ENCODE measurements at regions of chr2 and their contacts with region 1.

Region 1: GRCh38 chr2:45650851-45651414 is 542 bp upstream of the PRKCE start:
- DNase-seq: peak; percentile 84 to 97 (median 97)
- ATAC-seq: peak; percentile 97
- H3K4me3 ChIP-seq: peak overlapping the region; percentile 95
- H3K4me3 Mint-ChIP-seq: peak overlapping the region; percentile 83 to 100 (median 95)
- H3K27ac ChIP-seq: peak overlapping the region; percentile 79
- H3K27ac Mint-ChIP-seq: peak overlapping the region; percentile 90 to 99 (median 95)
- H3K4me1 ChIP-seq: peaks cover 10 to 11% of the 10 kb centered on the region in 2 donors
- H3K4me1 Mint-ChIP-seq: peaks cover 20 to 41% (median 34%) of the 10 kb centered on the region in 7 donors
- H3K27me3 ChIP-seq: peaks cover 0 to 3% of the 10 kb centered on the region in 2 donors
- H3K27me3 Mint-ChIP-seq: peaks cover 0 to 25% (median 0%) of the 10 kb centered on the region in 5 donors

Region 2: DNA sequence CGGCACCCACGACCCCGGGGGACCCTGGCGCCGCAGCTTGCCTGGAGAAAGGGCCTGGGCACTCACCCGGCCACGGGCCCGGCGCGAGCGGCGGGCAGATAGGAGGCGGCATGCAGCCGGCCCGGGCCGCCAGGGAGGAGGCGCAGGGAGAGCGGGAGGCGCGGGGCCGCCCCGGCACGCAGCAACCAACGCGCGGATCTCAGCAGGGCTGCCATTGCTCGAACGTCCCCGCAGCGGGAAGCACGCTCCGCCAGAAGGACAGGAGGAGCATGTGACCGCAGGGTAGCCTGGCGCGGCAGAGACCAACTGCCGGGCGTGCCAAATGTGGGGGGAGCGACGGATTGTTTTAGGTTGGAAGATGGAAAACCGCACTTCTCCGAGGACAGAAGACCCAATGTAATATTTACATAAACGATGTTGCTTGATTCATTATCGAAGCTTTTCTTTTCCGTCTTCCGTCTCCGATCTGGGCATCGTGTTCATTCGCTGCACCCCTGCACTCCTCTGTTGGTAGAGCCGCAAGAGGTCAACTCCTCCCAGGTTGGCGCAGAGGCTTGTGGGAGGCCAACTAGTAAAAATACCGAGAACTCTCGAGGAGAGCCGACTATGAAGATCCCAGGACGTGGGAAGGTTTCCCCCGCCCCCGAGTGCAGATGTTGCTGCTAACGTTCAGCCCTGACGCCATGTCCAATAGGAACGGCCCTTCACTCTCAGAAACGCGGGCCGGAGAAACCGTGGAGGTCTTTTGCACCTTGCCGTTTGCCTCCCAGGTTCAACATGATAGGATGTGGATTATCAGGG is 1655.0 kb before region 1 on chr2 and contains the start of gene LRPPRC:
- CTCF ChIA-PET with region 1: interaction called, 3 read pairs
- POLR2A ChIA-PET with region 1: no interaction called
- intact Hi-C with region 1: loop called (anchors 1 to 2 kb)
- DNase-seq: peak; percentile 69 to 95 (median 90)
- ATAC-seq: peak; percentile 98
- H3K4me3 ChIP-seq: peak within 1 kb of the TSS; percentile 98
- H3K4me3 Mint-ChIP-seq: peak within 1 kb of the TSS; percentile 89 to 99 (median 90)
- H3K27ac ChIP-seq: peak within 1 kb of the TSS; percentile 84
- H3K27ac Mint-ChIP-seq: peak within 1 kb of the TSS; percentile 95 to 100 (median 97)
- H3K4me1 ChIP-seq: peaks cover 9 to 25% of the 10 kb centered on the region in 2 donors
- H3K4me1 Mint-ChIP-seq: peaks cover 34 to 62% (median 52%) of the 10 kb centered on the region in 7 donors
- H3K27me3 ChIP-seq: no peaks in the 10 kb centered on the region
- H3K27me3 Mint-ChIP-seq: peaks cover 0 to 1% (median 0%) of the 10 kb centered on the region in 5 donors
- total RNA-seq, gene LRPPRC: 54.3 to 92.7 (median 71.2) TPM

Region 3: DNA sequence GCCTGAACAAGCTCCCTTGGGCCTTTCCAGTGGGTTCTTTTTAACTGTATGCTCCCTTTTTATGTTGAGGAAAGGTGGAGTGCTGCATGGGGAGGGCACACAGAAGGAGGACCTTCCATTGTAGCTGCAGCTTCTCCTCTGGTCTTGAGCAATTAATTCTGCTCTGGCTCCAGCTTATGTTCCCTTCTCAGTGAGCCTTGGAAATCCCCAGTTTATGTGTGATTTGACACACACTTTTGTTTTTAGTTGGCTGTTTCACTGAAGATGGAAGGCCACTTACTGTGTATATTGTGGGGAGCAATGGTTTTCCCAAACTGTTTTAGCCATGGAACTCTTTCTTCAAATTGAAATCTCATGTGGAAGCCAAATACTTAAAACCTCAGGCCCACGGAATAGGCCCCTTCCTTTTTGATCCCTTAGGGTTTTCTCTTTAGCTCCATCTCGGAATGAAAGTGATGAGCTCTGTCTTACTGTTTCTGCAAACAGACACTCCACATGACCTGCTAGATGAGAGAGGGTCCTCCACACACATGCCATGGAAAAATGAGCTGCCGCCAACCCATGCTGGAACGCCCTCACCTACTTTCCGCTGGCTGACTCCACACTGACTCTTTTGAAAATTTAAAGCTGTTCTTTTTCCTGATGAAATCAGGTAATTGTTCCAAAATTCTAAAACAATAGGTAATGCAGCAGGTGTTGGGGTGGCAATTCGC is 360.8 kb before region 1 on chr2:
- CTCF ChIA-PET with region 1: no interaction called
- POLR2A ChIA-PET with region 1: no interaction called
- intact Hi-C with region 1: no loop called
- DNase-seq: no peak
- ATAC-seq: no peak
- H3K4me3 ChIP-seq: no peak overlapping the region
- H3K4me3 Mint-ChIP-seq: no peak overlapping the region
- H3K27ac ChIP-seq: no peak overlapping the region
- H3K27ac Mint-ChIP-seq: no peak overlapping the region
- H3K4me1 ChIP-seq: no peaks in the 10 kb centered on the region
- H3K4me1 Mint-ChIP-seq: peaks cover 0 to 7% (median 0%) of the 10 kb centered on the region in 7 donors
- H3K27me3 ChIP-seq: no peaks in the 10 kb centered on the region
- H3K27me3 Mint-ChIP-seq: peaks cover 10 to 32% (median 24%) of the 10 kb centered on the region in 5 donors

Region 4: DNA sequence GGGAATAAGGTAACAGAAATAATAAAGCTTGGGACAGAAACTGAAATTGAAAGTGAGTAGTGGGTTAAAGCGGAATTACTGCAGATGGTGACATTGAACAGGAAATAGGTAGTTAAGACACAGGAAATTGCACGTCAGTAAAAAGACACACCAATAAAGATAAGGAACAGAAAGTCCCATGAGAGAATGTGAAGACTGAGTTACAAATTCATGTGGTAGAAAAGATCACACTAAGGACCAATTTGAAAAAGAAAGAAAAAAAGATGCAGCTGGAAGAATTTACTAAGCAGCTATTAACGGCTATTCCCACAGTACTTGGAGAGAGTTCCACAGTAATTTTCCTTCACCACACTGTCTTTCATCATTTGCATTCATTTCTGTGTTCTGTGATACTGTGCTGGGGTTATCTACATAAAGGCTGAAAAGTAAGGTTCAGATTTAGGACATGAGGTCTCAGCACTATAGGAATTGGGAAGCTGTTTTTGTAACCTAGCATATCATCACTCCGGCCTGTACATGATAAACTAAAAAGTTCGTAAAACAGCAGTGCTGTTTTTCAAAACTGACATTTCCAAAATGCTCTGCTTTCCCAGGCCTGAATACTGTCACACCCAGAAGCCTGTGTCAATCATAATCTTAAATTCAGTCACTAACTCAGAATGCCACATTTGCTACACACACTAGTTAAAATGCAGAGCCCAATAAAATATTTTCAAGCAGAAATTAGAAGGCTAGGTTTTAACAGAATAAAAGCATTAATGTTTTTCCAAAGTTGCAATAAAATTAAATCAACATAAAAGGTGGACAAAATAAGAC is 82.8 kb before region 1 on chr2:
- CTCF ChIA-PET with region 1: no interaction called
- POLR2A ChIA-PET with region 1: interaction called, 4 read pairs
- intact Hi-C with region 1: loop called (anchors 1 kb)
- DNase-seq: peak in 7 of 9 donors; percentile 65 to 83 (median 80)
- ATAC-seq: peak; percentile 98
- H3K4me3 ChIP-seq: peak overlapping the region; percentile 54
- H3K4me3 Mint-ChIP-seq: peak overlapping the region; percentile 73 to 96 (median 88)
- H3K27ac ChIP-seq: peak overlapping the region; percentile 76
- H3K27ac Mint-ChIP-seq: peak overlapping the region; percentile 90 to 98 (median 94)
- H3K4me1 ChIP-seq: peaks cover 12 to 14% of the 10 kb centered on the region in 2 donors
- H3K4me1 Mint-ChIP-seq: peaks cover 15 to 49% (median 39%) of the 10 kb centered on the region in 7 donors
- H3K27me3 ChIP-seq: no peaks in the 10 kb centered on the region
- H3K27me3 Mint-ChIP-seq: no peaks in the 10 kb centered on the region

Region 5: GRCh38 chr2:45860136-45861121 is 209.5 kb after region 1 on chr2:
- CTCF ChIA-PET with region 1: no interaction called
- POLR2A ChIA-PET with region 1: interaction called, 4 read pairs
- intact Hi-C with region 1: loop called (anchors 1 to 10 kb)
- DNase-seq: peak in 8 of 9 donors; percentile 26 to 59 (median 46)
- ATAC-seq: peak; percentile 72
- H3K4me3 ChIP-seq: peak overlapping the region; percentile 64
- H3K4me3 Mint-ChIP-seq: peak overlapping the region; percentile 83 to 95 (median 88)
- H3K27ac ChIP-seq: peak overlapping the region; percentile 71
- H3K27ac Mint-ChIP-seq: peak overlapping the region; percentile 86 to 97 (median 92)
- H3K4me1 ChIP-seq: peaks cover 0 to 40% of the 10 kb centered on the region in 2 donors
- H3K4me1 Mint-ChIP-seq: peaks cover 30 to 63% (median 58%) of the 10 kb centered on the region in 7 donors
- H3K27me3 ChIP-seq: no peaks in the 10 kb centered on the region
- H3K27me3 Mint-ChIP-seq: no peaks in the 10 kb centered on the region

Region 6: GRCh38 chr2:46351750-46352138 is 700.8 kb after region 1 on chr2:
- CTCF ChIA-PET with region 1: no interaction called
- POLR2A ChIA-PET with region 1: no interaction called
- intact Hi-C with region 1: loop called (anchors 5 kb)
- DNase-seq: peak in 8 of 9 donors; percentile 54 to 85 (median 76)
- ATAC-seq: peak; percentile 80
- H3K4me3 ChIP-seq: peak overlapping the region; percentile 56
- H3K4me3 Mint-ChIP-seq: peak overlapping the region; percentile 72 to 93 (median 83)
- H3K27ac ChIP-seq: peak overlapping the region; percentile 46
- H3K27ac Mint-ChIP-seq: peak overlapping the region; percentile 81 to 97 (median 91)
- H3K4me1 ChIP-seq: peaks cover 29 to 70% of the 10 kb centered on the region in 2 donors
- H3K4me1 Mint-ChIP-seq: peaks cover 43 to 99% (median 91%) of the 10 kb centered on the region in 7 donors
- H3K27me3 ChIP-seq: no peaks in the 10 kb centered on the region
- H3K27me3 Mint-ChIP-seq: no peaks in the 10 kb centered on the region

Region 7: GRCh38 chr2:47402805-47403608 is 1752.1 kb after region 1 on chr2 and contains the start of gene MSH2:
- CTCF ChIA-PET with region 1: no interaction called
- POLR2A ChIA-PET with region 1: no interaction called
- intact Hi-C with region 1: loop called in 1 of 2 experiments (anchors 2 kb)
- DNase-seq: peak; percentile 72 to 94 (median 91)
- ATAC-seq: peak; percentile 97
- H3K4me3 ChIP-seq: peak within 1 kb of the TSS; percentile 90
- H3K4me3 Mint-ChIP-seq: peak within 1 kb of the TSS; percentile 90 to 100 (median 98)
- H3K27ac ChIP-seq: peak within 1 kb of the TSS; percentile 77
- H3K27ac Mint-ChIP-seq: peak within 1 kb of the TSS; percentile 81 to 96 (median 91)
- H3K4me1 ChIP-seq: peaks cover 9 to 12% of the 10 kb centered on the region in 2 donors
- H3K4me1 Mint-ChIP-seq: peaks cover 32 to 49% (median 40%) of the 10 kb centered on the region in 7 donors
- H3K27me3 ChIP-seq: no peaks in the 10 kb centered on the region
- H3K27me3 Mint-ChIP-seq: peaks cover 0 to 2% (median 0%) of the 10 kb centered on the region in 5 donors
- total RNA-seq, gene MSH2: 12.2 to 44.7 (median 31.4) TPM